Heart left ventricle (tissue), 16 donors: ENCODE measurements at regions of chr3 and their contacts with region 1.

Region 1: GRCh38 chr3:23800731-23801130 is 5.0 kb upstream of the UBE2E1 start:
- DNase-seq: no peak
- ATAC-seq: peak in 3 of 4 donors; percentile 72 to 80 (median 73)
- H3K4me3 ChIP-seq: no peak overlapping the region
- H3K27ac ChIP-seq: no peak overlapping the region
- H3K4me1 ChIP-seq: peaks cover 0 to 5% (median 0%) of the 10 kb centered on the region in 12 donors
- H3K27me3 ChIP-seq: no peaks in the 10 kb centered on the region
- CTCF ChIP-seq: peak in 11 of 12 donors; percentile 16 to 54 (median 33)
- POLR2A ChIP-seq: no peak

Region 2: DNA sequence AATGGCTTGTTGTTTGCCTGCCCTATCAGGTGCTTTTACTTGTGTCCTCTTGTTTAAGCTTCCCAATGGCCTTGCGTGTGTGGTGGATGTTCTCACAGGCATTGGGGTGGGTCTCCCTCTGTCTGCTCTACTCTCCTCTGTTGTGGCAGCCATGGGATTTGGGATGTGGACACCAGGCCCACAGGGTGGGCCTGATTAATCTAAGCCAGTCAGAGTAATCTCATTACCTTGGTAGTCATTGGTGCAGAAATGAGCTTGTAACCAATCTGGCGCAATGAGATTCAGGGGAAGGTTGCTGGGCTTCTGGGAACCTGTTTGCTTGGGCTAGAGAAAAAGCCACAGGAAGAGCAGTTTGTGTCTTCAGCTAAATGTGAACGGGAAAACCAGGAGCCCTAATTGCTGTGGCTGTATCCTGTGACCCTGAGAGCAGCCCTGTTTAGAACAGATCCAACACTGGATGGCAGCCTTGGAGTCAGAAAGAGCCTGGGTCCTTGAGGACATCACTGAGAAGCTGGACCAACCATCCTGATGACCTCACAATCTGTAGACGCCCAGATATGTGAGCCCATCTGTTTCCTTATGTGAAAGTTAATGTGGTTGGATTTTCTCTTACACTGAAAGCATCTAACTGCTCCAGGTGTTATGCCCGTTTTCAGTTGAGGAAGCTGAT is 152.3 kb before region 1 on chr3:
- intact Hi-C with region 1: loop called in 1 of 10 experiments (anchors 5 kb)
- DNase-seq: no peak
- ATAC-seq: peak; percentile 64 to 80 (median 78)
- H3K4me3 ChIP-seq: no peak overlapping the region
- H3K27ac ChIP-seq: no peak overlapping the region
- H3K4me1 ChIP-seq: peaks cover 0 to 21% (median 2%) of the 10 kb centered on the region in 12 donors
- H3K27me3 ChIP-seq: no peaks in the 10 kb centered on the region
- CTCF ChIP-seq: peak in 2 of 12 donors; percentile 19 to 31
- POLR2A ChIP-seq: no peak

Region 3: DNA sequence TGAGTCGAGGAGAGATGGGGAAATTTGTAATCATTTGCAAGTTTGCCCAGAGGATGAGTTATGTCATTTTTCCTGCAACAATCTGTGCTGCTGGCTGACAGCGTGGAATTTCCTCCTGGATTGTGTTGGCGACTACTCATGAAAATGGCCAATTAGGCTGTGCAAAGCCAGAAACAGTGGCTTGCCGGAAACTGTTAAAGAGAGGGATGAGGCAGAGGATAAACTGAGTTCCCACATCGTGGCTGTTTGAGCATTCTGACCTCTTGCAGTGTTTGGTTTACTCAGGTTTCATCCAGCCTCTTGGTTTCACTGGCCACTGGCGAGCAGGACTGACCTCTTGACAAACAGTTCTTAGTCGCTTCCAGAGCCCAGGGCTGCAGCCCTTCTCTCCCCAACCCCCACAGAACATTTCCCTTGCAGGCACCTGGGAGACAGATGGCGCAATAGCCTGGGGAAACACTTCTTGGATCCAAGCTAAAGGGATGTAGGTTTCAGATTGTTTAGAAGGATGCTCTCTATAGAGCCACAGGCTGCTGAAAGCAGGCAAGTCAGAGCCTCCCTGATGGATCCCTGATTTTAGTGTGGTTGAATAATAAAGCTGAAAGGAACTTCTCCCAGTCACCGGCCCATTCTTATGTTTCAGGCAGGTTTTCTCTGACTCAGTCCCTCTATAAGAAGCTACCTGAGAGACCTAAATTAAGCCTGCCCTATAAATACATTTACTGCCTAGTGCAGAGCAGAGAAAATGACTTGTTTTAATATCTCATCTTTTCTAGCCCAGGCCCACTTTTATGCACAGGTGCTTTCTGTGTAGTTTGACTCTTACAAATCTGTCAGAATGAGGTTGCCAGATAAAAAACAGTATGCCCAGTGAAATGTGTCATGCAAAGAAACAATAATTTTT is 87.8 kb before region 1 on chr3:
- intact Hi-C with region 1: loop called in 2 of 10 experiments (anchors 5 to 10 kb)
- DNase-seq: peak in 4 of 5 donors; percentile 54 to 61 (median 57)
- ATAC-seq: peak; percentile 60 to 79 (median 77)
- H3K4me3 ChIP-seq: peak overlapping the region in 3 of 12 donors; percentile 17 to 28 (median 27)
- H3K27ac ChIP-seq: peak overlapping the region in 8 of 12 donors; percentile 4 to 75 (median 46)
- H3K4me1 ChIP-seq: peaks cover 0 to 24% (median 0%) of the 10 kb centered on the region in 12 donors
- H3K27me3 ChIP-seq: no peaks in the 10 kb centered on the region
- CTCF ChIP-seq: peak in 9 of 12 donors; percentile 5 to 47 (median 31)
- POLR2A ChIP-seq: no peak

Region 4: GRCh38 chr3:23751212-23751723 is 49.5 kb before region 1 on chr3:
- intact Hi-C with region 1: loop called in 2 of 10 experiments (anchors 5 to 10 kb)
- DNase-seq: peak in 1 of 5 donors; percentile 36
- ATAC-seq: peak in 3 of 4 donors; percentile 32 to 69 (median 66)
- H3K4me3 ChIP-seq: no peak overlapping the region
- H3K27ac ChIP-seq: peak overlapping the region in 1 of 12 donors; percentile 61
- H3K4me1 ChIP-seq: peaks cover 0 to 40% (median 13%) of the 10 kb centered on the region in 12 donors
- H3K27me3 ChIP-seq: no peaks in the 10 kb centered on the region
- CTCF ChIP-seq: no peak
- POLR2A ChIP-seq: no peak